ENCODE measurements at regions of chr15 and their contacts with region 1.

Region 1: GRCh38 chr15:74322181-74323076 is 45.0 kb downstream of the CYP11A1 start:
- DNase-seq: peak; percentile 49
- H3K4me3 ChIP-seq: no peak overlapping the region
- H3K27ac ChIP-seq: no peak overlapping the region
- H3K4me1 ChIP-seq: no peaks in the 10 kb centered on the region
- H3K27me3 ChIP-seq: peaks cover 0 to 1% of the 10 kb centered on the region in 2 experiments
- CTCF ChIP-seq: peak; percentile 74 to 93
- POLR2A ChIP-seq: no peak

Region 2: GRCh38 chr15:74044267-74045110 is 277.9 kb before region 1 on chr15:
- CTCF ChIA-PET with region 1: interaction called, 13 read pairs
- POLR2A ChIA-PET with region 1: no interaction called
- dilution Hi-C with region 1: no loop called
- intact Hi-C with region 1: no loop called
- DNase-seq: no peak
- H3K4me3 ChIP-seq: no peak overlapping the region
- H3K27ac ChIP-seq: no peak overlapping the region
- H3K4me1 ChIP-seq: peaks cover 9% of the 10 kb centered on the region
- H3K27me3 ChIP-seq: no peaks in the 10 kb centered on the region
- CTCF ChIP-seq: no peak
- POLR2A ChIP-seq: no peak

Region 3: DNA sequence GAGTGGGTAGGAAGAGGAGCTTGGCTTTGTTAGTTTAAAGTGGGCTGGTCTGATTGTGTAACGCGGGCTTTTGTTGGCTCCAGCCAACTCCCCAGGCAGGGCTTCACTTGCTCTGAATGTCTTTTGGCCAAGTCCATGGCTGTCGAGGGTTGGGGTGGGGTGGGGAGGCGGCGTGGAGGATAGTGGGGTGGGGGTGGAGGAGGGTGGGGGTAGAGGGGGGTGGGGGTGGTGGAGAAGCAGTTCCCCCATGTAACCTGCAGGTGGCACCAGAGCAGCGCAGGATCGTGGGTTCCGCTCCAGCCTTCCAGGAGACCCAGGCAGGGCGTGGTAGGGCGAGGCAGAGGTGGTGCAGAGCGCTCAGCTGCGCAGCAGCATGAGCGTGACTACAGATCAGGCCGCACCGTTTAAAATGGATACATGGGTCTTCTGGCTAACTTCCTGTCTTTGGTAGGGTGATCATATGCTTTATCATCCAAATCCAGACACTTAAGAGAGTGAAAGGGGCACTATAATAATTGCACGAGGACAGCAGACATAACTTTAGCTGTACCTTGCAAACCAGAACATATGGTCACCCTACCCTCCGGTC is 268.4 kb before region 1 on chr15:
- CTCF ChIA-PET with region 1: interaction called, 58 read pairs
- POLR2A ChIA-PET with region 1: no interaction called
- dilution Hi-C with region 1: no loop called
- intact Hi-C with region 1: loop called (anchors 1 kb)
- DNase-seq: peak; percentile 41
- H3K4me3 ChIP-seq: no peak overlapping the region
- H3K27ac ChIP-seq: no peak overlapping the region
- H3K4me1 ChIP-seq: no peaks in the 10 kb centered on the region
- H3K27me3 ChIP-seq: peaks cover 3 to 12% of the 10 kb centered on the region in 2 experiments
- CTCF ChIP-seq: peak; percentile 19 to 77
- POLR2A ChIP-seq: no peak

Region 4: DNA sequence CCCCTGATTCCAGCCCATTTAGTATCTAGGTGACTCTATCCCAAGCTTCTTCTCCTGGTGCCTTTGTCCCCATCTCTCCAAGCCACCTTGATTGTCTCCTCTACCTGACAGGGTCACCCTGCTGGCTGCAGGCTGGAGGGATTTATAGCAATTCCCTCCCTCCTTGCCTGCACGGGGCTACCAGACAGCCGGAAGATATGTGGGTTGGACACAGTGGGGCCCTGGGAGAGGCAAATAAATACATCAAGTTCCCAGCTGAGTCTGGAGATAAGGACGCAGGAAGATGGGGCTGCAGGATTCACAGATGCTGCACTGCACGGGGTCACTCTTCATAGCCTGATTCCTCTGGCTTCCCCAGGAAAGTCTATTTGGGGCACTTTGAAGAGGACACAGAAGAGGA is 201.4 kb before region 1 on chr15:
- CTCF ChIA-PET with region 1: interaction called, 25 read pairs
- POLR2A ChIA-PET with region 1: no interaction called
- dilution Hi-C with region 1: no loop called
- intact Hi-C with region 1: no loop called
- DNase-seq: no peak
- H3K4me3 ChIP-seq: no peak overlapping the region
- H3K27ac ChIP-seq: no peak overlapping the region
- H3K4me1 ChIP-seq: no peaks in the 10 kb centered on the region
- H3K27me3 ChIP-seq: peaks cover 22 to 23% of the 10 kb centered on the region in 2 experiments
- CTCF ChIP-seq: no peak
- POLR2A ChIP-seq: no peak

Region 5: GRCh38 chr15:74127260-74127953 is 195.0 kb before region 1 on chr15:
- CTCF ChIA-PET with region 1: interaction called, 46 read pairs
- POLR2A ChIA-PET with region 1: interaction called, 3 read pairs
- dilution Hi-C with region 1: no loop called
- intact Hi-C with region 1: loop called (anchors 1 kb)
- DNase-seq: peak; percentile 75
- H3K4me3 ChIP-seq: peak overlapping the region in 1 of 3 experiments; percentile 14
- H3K27ac ChIP-seq: no peak overlapping the region
- H3K4me1 ChIP-seq: peaks cover 4% of the 10 kb centered on the region
- H3K27me3 ChIP-seq: peaks cover 56 to 71% of the 10 kb centered on the region in 2 experiments
- CTCF ChIP-seq: peak; percentile 95 to 100
- POLR2A ChIP-seq: no peak

Region 6: DNA sequence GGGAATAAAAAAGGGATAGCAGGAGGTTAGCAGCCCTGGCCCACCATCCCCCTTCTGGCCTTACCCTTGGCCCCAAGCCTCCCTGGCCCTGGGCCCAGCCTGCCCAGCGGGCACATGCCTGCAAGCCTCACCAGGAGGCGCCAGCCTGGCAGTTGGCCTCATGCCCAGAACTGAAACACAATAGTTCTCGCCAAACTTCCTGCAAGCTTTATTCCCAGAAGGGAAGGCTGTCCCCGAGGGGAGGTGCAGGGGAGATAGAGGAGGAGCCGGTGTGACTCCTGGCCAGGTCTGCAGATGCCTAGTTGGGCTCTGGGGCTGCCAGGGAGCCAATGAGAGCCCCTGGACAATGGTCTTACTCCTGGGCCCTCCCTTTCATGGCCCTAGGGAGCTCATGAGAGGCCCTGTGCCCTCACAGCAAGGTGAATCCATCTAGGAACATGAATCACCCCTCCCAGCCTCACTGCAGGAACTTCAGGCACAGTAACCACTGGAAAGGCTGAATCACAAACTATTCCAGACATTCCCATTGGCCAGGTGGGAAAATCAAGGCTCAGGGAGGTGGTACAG is 82.3 kb before region 1 on chr15:
- CTCF ChIA-PET with region 1: interaction called, 6 read pairs
- POLR2A ChIA-PET with region 1: no interaction called
- dilution Hi-C with region 1: no loop called
- intact Hi-C with region 1: loop called (anchors 5 kb)
- DNase-seq: peak; percentile 92
- H3K4me3 ChIP-seq: no peak overlapping the region
- H3K27ac ChIP-seq: peak overlapping the region; percentile 13
- H3K4me1 ChIP-seq: peaks cover 11% of the 10 kb centered on the region
- H3K27me3 ChIP-seq: no peaks in the 10 kb centered on the region
- CTCF ChIP-seq: peak; percentile 65 to 80
- POLR2A ChIP-seq: no peak